ENCODE measurements at regions of chr20 and their contacts with region 1.

Region 1: GRCh38 chr20:2470423-2471193 is at the start of gene SNRPB:
- DNase-seq: peak; percentile 95 to 98 (median 96)
- H3K4me3 ChIP-seq: peak within 1 kb of the TSS; percentile 85 to 90
- H3K4me3 Mint-ChIP-seq: peak within 1 kb of the TSS; percentile 96 to 99 (median 98)
- H3K27ac ChIP-seq: peak within 1 kb of the TSS; percentile 79
- H3K27ac Mint-ChIP-seq: peak within 1 kb of the TSS; percentile 96 to 99 (median 98)
- H3K4me1 ChIP-seq: peaks cover 32% of the 10 kb centered on the region
- H3K4me1 Mint-ChIP-seq: peaks cover 28 to 51% (median 39%) of the 10 kb centered on the region in 4 donors
- H3K27me3 ChIP-seq: no peaks in the 10 kb centered on the region
- H3K27me3 Mint-ChIP-seq: no peaks in the 10 kb centered on the region
- total RNA-seq, gene SNRPB: 96.2 to 99.3 TPM

Region 2: DNA sequence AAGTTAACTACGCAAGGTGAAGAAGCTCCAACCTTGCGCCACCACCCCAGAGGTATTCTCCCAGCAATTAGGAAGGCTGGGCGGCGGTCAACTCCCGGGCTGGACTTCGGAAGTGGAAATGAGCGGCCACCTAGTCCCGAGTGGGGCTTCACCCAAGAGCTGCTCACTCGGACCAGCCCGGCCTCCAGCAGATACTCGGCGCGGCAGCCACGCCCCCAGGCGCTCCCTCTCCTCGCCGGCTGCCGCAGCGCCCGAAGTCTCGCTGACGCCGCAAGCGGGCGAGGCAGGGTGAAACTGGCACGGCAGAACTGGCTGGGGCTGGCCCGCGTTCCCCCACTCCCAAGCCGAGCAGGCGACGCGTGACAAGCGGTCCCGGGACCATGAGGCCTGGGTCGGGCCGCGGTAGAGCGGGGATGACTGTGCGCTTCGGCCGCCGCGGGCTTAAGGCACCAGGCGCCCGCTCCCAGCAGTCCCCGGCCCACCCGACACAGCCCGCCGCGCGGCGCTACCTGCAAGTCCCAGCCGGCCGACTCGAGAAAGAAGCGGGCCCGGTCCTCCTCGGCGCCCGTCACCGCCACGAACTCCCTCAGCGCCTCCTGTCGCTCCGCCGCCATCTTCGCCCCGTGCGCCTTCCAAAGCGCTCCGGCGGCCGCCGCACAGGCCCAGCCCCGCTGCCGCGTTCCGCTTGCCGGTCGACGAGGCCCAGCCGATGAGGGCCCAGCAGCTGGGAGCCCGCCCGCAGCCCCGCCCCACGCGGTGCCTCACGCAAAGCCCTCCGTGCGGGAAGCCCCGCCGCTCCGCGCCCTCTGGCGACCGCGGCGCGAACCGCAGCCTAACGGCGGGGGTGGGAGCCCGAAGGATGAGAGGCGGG is 1004.2 kb before region 1 on chr20 and contains the start of gene NSFL1C:
- CTCF ChIA-PET with region 1: no interaction called
- POLR2A ChIA-PET with region 1: no interaction called
- intact Hi-C with region 1: loop called (anchors 2 kb)
- DNase-seq: peak; percentile 95 to 99 (median 97)
- H3K4me3 ChIP-seq: peak within 1 kb of the TSS; percentile 53 to 65
- H3K4me3 Mint-ChIP-seq: peak within 1 kb of the TSS; percentile 78 to 93 (median 88)
- H3K27ac ChIP-seq: peak within 1 kb of the TSS; percentile 89
- H3K27ac Mint-ChIP-seq: peak within 1 kb of the TSS; percentile 66 to 95 (median 91)
- H3K4me1 ChIP-seq: peaks cover 41% of the 10 kb centered on the region
- H3K4me1 Mint-ChIP-seq: peaks cover 34 to 49% (median 40%) of the 10 kb centered on the region in 4 donors
- H3K27me3 ChIP-seq: no peaks in the 10 kb centered on the region
- H3K27me3 Mint-ChIP-seq: peaks cover 1 to 5% of the 10 kb centered on the region in 2 donors
- total RNA-seq, gene NSFL1C: 57.5 to 65.8 TPM

Region 3: DNA sequence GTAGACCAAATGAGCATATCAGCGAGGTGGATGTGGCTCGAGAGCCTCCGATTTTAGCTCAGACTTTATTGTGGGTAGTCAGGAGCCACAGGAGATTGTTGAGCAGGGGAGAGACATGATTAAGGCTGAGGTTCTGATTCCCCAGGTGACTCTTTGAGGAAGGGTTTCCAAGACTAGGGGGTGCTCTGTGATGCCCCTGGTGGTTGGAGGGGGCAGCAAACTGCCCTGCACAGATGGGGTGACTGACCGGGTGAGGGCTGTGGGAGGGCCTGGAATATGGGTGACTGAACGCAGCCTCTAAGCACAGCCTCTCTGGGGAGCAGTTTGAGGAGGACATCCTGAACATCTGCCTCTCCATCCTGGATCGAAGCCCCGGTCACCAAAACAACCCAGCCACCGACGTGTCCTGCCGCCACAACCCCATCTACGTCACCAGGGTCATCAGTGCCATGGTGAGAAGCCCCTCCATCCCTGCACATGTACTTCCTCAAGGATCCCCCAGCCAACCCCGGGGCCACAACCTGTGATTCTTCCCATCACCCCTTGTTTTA is 72.9 kb before region 1 on chr20:
- CTCF ChIA-PET with region 1: no interaction called
- POLR2A ChIA-PET with region 1: no interaction called
- intact Hi-C with region 1: no loop called
- DNase-seq: no peak
- H3K4me3 ChIP-seq: no peak overlapping the region
- H3K4me3 Mint-ChIP-seq: no peak overlapping the region
- H3K27ac ChIP-seq: no peak overlapping the region
- H3K27ac Mint-ChIP-seq: no peak overlapping the region
- H3K4me1 ChIP-seq: no peaks in the 10 kb centered on the region
- H3K4me1 Mint-ChIP-seq: no peaks in the 10 kb centered on the region
- H3K27me3 ChIP-seq: no peaks in the 10 kb centered on the region
- H3K27me3 Mint-ChIP-seq: peaks cover 0 to 4% of the 10 kb centered on the region in 2 donors

Region 4: GRCh38 chr20:2451939-2452732 is 18.5 kb before region 1 on chr20:
- CTCF ChIA-PET with region 1: interaction called, 11 read pairs
- POLR2A ChIA-PET with region 1: interaction called, 3 read pairs
- intact Hi-C with region 1: no loop called
- DNase-seq: peak; percentile 44 to 61 (median 50)
- H3K4me3 ChIP-seq: no peak overlapping the region
- H3K4me3 Mint-ChIP-seq: no peak overlapping the region
- H3K27ac ChIP-seq: no peak overlapping the region
- H3K27ac Mint-ChIP-seq: peak overlapping the region in 1 of 7 donors; percentile 31
- H3K4me1 ChIP-seq: peaks cover 4% of the 10 kb centered on the region
- H3K4me1 Mint-ChIP-seq: peaks cover 7 to 21% (median 14%) of the 10 kb centered on the region in 4 donors
- H3K27me3 ChIP-seq: no peaks in the 10 kb centered on the region
- H3K27me3 Mint-ChIP-seq: no peaks in the 10 kb centered on the region

Region 5: GRCh38 chr20:2523919-2524708 is 53.5 kb after region 1 on chr20:
- CTCF ChIA-PET with region 1: interaction called, 14 read pairs
- POLR2A ChIA-PET with region 1: interaction called, 10 read pairs
- intact Hi-C with region 1: loop called (anchors 1 kb)
- DNase-seq: peak; percentile 86 to 90 (median 87)
- H3K4me3 ChIP-seq: peak overlapping the region; percentile 59 to 83
- H3K4me3 Mint-ChIP-seq: peak overlapping the region; percentile 90 to 94 (median 92)
- H3K27ac ChIP-seq: peak overlapping the region; percentile 63
- H3K27ac Mint-ChIP-seq: peak overlapping the region; percentile 29 to 89 (median 77)
- H3K4me1 ChIP-seq: peaks cover 10% of the 10 kb centered on the region
- H3K4me1 Mint-ChIP-seq: peaks cover 10 to 23% (median 15%) of the 10 kb centered on the region in 4 donors
- H3K27me3 ChIP-seq: no peaks in the 10 kb centered on the region
- H3K27me3 Mint-ChIP-seq: peaks cover 0 to 2% of the 10 kb centered on the region in 2 donors

Region 6: DNA sequence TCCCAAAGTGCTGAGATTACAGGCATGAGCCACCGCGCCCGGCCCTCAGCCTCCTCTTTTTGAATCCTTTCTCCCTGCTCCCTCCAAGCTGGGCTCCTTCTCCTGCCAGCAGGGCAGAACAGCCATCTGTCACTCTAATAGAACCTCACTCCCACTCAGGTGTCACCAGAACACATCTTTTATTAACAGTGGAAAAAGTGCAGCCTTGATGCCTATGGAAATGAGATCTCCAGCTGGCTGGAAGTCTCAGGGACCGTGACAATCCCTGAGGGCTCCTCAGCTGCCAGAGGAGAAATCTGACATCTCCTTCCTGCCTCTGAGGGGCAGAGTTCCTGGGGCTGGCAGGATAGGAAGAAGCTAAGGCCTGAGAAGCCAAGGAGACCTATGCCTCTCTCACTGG is 93.8 kb after region 1 on chr20:
- CTCF ChIA-PET with region 1: no interaction called
- POLR2A ChIA-PET with region 1: no interaction called
- intact Hi-C with region 1: no loop called
- DNase-seq: no peak
- H3K4me3 ChIP-seq: no peak overlapping the region
- H3K4me3 Mint-ChIP-seq: no peak overlapping the region
- H3K27ac ChIP-seq: no peak overlapping the region
- H3K27ac Mint-ChIP-seq: no peak overlapping the region
- H3K4me1 ChIP-seq: no peaks in the 10 kb centered on the region
- H3K4me1 Mint-ChIP-seq: no peaks in the 10 kb centered on the region
- H3K27me3 ChIP-seq: peaks cover 9% of the 10 kb centered on the region
- H3K27me3 Mint-ChIP-seq: peaks cover 38 to 47% of the 10 kb centered on the region in 2 donors

Region 7: GRCh38 chr20:2663887-2664719 is 193.5 kb after region 1 on chr20 and contains the start of gene IDH3B:
- CTCF ChIA-PET with region 1: no interaction called
- POLR2A ChIA-PET with region 1: interaction called, 10 read pairs
- intact Hi-C with region 1: no loop called
- DNase-seq: peak; percentile 90 to 95 (median 91)
- H3K4me3 ChIP-seq: peak within 1 kb of the TSS; percentile 57 to 93
- H3K4me3 Mint-ChIP-seq: peak within 1 kb of the TSS; percentile 87 to 98 (median 94)
- H3K27ac ChIP-seq: peak within 1 kb of the TSS; percentile 83
- H3K27ac Mint-ChIP-seq: peak within 1 kb of the TSS; percentile 91 to 100 (median 98)
- H3K4me1 ChIP-seq: peaks cover 13% of the 10 kb centered on the region
- H3K4me1 Mint-ChIP-seq: peaks cover 17 to 32% (median 25%) of the 10 kb centered on the region in 4 donors
- H3K27me3 ChIP-seq: no peaks in the 10 kb centered on the region
- H3K27me3 Mint-ChIP-seq: no peaks in the 10 kb centered on the region
- total RNA-seq, gene IDH3B: 93.3 to 96.5 TPM

Measured in CD4-positive, alpha-beta memory T cell (primary cell).